Right cardiac atrium (tissue), 5 donors: ENCODE measurements at regions of chr15 and their contacts with region 1.

Region 1: GRCh38 chr15:98727115-98728085 is 79.1 kb downstream of the IGF1R start:
- DNase-seq: peak; percentile 93 to 94 (median 93)
- ATAC-seq: peak; percentile 95 to 97
- H3K4me3 ChIP-seq: no peak overlapping the region
- H3K27ac ChIP-seq: peak overlapping the region; percentile 98
- H3K4me1 ChIP-seq: peaks cover 35% of the 10 kb centered on the region
- H3K27me3 ChIP-seq: no peaks in the 10 kb centered on the region

Region 2: DNA sequence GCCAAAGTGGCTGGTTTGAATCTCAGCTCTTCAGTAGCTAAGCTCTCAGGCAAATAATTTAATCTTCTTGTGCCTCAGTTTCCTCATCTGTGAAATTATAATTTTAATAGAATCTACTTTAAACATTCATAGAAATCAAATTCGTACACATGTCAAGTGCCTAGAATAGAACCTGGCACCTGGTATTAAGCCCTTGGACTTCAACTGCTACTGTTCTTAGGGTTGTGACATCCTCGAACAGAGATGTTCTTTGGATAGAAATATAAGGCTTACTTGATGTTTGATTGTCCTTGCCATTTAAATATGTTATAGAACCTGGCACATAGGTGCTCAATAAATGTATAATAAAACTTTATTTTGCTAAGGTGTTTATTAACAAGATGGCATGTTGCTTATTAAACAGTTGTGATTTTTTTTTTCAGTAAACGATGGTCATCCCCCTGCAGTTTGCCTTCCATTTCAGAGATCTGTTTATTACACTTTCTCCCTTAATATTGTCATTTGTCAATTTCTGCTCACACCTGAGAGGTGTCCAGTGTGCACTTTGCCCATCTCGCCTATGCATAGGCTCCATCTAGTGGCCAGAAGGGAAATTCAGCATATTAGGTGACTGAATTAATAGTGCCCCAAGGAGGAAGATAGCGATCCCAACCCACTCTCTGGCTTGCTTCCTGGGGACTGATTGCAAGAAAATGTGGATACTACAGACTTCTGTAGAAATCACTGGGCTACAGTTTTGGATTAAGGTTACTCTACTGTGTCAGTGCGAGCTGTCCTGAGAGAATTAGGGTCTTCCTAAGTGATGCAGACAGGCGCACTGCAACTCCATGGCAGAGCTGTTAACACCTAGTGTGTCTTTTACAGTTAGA is 68.3 kb before region 1 on chr15:
- intact Hi-C with region 1: loop called in 1 of 4 experiments (anchors 10 kb)
- DNase-seq: peak in 1 of 3 donors; percentile 39
- ATAC-seq: peak; percentile 66 to 79
- H3K4me3 ChIP-seq: no peak overlapping the region
- H3K27ac ChIP-seq: no peak overlapping the region
- H3K4me1 ChIP-seq: peaks cover 6% of the 10 kb centered on the region
- H3K27me3 ChIP-seq: no peaks in the 10 kb centered on the region